BJ (cell line): ENCODE measurements at regions of chr16 and their contacts with region 1.

Region 1: DNA sequence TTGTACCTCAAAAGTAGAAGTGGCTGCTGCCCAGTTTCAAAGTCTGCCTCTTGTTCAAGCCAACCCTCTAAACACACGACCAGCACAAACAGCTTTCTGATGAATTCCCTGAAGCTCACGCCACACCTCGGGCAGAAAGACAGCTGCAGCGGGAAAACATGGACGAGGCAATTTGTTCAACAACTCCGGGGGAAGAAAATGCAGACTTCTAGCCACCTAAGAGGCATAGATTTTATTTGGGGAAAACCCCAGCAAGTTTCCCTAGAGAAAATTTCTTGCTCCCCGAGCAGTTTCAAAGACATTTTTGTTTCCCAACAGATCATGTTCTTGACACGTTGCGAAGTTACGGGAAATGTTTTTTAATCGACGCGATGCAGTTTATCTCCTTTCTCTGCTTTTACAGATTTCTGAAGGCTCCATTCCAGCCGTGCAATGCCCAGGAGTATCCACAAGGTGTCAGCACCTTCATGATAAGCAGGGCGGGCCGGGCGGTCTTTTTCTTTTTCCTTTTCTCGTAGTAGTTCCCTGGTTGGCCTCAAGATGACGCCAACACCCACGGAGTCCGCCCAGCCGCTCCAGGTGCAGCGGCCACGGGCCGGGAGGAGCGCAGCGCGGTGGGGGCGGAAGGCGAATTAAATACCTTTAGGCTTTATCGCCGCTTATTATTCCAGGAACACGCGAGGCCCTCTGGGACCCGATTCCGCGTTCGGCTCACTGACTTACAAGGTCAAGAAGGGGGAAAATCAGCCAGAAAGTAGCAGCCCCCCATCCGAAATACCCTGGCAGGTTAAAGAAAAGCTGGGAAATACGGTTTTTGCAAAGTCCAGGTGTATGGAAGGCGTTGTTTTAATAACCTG is 2.9 kb upstream of the FOXC2 start:
- DNase-seq: no peak
- H3K4me3 ChIP-seq: peak overlapping the region; percentile 26
- H3K27me3 ChIP-seq: peaks cover 4% of the 10 kb centered on the region
- CTCF ChIP-seq: peak; percentile 100

Region 2: GRCh38 chr16:86542766-86543755 is 20.7 kb before region 1 on chr16:
- CTCF ChIA-PET with region 1: no interaction called
- POLR2A ChIA-PET with region 1: no interaction called
- DNase-seq: no peak
- H3K4me3 ChIP-seq: no peak overlapping the region
- H3K27me3 ChIP-seq: no peaks in the 10 kb centered on the region
- CTCF ChIP-seq: no peak

Region 3: GRCh38 chr16:86575754-86576557 is 12.2 kb after region 1 on chr16:
- CTCF ChIA-PET with region 1: interaction called, 14 read pairs
- POLR2A ChIA-PET with region 1: no interaction called
- DNase-seq: peak; percentile 65
- H3K4me3 ChIP-seq: peak overlapping the region; percentile 48
- H3K27me3 ChIP-seq: no peaks in the 10 kb centered on the region
- CTCF ChIP-seq: peak; percentile 93

Region 4: DNA sequence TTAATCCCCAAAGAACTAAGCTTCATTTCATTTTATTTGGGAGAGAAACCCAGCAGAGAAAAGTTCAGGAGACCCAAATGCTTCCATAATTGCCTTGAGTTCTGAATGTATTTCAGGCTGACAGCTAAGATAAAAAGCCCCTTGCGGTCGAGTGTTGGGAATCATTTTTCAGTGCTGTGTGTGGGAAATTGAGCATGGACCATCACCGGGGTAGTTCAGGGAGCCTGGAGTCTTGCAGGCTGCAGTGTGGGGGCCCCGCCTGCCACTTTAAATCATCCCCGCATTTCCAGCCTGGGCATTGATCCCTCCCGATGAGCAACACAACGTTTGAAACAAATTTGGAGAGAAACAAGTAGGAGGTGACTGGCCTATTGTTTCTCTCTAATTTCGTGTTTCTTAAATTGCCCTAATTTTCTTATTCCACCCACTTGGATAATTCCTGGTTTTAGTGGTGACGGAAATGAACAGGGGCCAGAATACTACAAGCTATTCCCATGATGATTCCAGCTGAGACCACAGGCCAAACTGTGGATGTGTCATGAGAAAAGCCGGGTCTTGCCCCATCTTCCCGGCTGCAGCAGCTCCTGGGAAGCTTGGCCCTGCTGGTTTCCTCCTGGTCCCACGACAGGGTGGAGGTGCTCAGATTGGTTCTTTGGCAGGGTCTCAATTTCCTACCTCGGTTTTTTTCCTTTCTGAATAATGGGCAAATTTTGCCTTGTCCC is 89.7 kb after region 1 on chr16:
- CTCF ChIA-PET with region 1: no interaction called
- POLR2A ChIA-PET with region 1: no interaction called
- DNase-seq: no peak
- H3K4me3 ChIP-seq: no peak overlapping the region
- H3K27me3 ChIP-seq: no peaks in the 10 kb centered on the region
- CTCF ChIP-seq: no peak

Region 5: DNA sequence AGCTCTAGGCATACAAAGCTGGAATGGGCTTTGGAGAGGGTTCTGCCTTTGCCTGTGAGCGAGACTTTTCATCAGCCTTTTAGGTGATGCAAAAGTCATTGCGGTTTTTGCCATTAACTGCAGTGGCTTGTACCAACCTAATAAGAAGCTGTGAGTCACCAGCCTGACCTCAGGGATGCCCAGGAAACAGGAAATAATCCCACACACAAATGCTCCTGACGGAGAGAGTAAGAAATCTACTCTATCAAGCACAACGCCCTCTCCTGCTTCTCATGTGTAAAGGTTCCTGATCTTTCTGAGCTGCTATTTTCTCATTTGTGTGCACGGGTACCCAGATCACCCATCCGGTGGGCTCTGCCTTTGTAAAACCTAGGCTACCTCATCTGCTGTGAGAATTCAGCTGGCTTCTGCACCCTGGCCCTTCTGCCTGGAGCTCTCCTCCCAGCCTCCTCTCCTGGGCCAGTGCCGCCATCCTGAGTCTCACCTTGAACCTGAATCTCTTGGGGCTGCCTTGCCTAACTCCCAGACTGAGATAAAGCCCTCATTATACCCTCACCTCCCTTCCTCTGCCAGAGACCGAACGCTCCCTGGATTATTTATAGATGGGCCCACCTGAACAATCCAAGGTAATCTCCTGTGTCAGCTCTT is 453.8 kb after region 1 on chr16:
- CTCF ChIA-PET with region 1: interaction called, 13 read pairs
- POLR2A ChIA-PET with region 1: no interaction called
- DNase-seq: peak; percentile 29
- H3K4me3 ChIP-seq: no peak overlapping the region
- H3K27me3 ChIP-seq: peaks cover 9% of the 10 kb centered on the region
- CTCF ChIP-seq: peak; percentile 40

Region 6: GRCh38 chr16:87056083-87056482 is 492.4 kb after region 1 on chr16:
- CTCF ChIA-PET with region 1: interaction called, 117 read pairs
- POLR2A ChIA-PET with region 1: no interaction called
- DNase-seq: no peak
- H3K4me3 ChIP-seq: no peak overlapping the region
- H3K27me3 ChIP-seq: peaks cover 7% of the 10 kb centered on the region
- CTCF ChIP-seq: peak; percentile 37

Region 7: GRCh38 chr16:87076950-87077749 is 513.4 kb after region 1 on chr16:
- CTCF ChIA-PET with region 1: interaction called, 12 read pairs
- POLR2A ChIA-PET with region 1: no interaction called
- DNase-seq: no peak
- H3K4me3 ChIP-seq: no peak overlapping the region
- H3K27me3 ChIP-seq: no peaks in the 10 kb centered on the region; the same call in 1 of the 2 replicates
- CTCF ChIP-seq: peak; percentile 79

Region 8: GRCh38 chr16:87278191-87279095 is 714.7 kb after region 1 on chr16:
- CTCF ChIA-PET with region 1: interaction called, 56 read pairs
- POLR2A ChIA-PET with region 1: no interaction called
- DNase-seq: peak; percentile 19
- H3K4me3 ChIP-seq: no peak overlapping the region
- H3K27me3 ChIP-seq: no peaks in the 10 kb centered on the region
- CTCF ChIP-seq: peak; percentile 96